CD4-positive, alpha-beta memory T cell (primary cell): ENCODE measurements at regions of chr10 and their contacts with region 1.

Region 1: DNA sequence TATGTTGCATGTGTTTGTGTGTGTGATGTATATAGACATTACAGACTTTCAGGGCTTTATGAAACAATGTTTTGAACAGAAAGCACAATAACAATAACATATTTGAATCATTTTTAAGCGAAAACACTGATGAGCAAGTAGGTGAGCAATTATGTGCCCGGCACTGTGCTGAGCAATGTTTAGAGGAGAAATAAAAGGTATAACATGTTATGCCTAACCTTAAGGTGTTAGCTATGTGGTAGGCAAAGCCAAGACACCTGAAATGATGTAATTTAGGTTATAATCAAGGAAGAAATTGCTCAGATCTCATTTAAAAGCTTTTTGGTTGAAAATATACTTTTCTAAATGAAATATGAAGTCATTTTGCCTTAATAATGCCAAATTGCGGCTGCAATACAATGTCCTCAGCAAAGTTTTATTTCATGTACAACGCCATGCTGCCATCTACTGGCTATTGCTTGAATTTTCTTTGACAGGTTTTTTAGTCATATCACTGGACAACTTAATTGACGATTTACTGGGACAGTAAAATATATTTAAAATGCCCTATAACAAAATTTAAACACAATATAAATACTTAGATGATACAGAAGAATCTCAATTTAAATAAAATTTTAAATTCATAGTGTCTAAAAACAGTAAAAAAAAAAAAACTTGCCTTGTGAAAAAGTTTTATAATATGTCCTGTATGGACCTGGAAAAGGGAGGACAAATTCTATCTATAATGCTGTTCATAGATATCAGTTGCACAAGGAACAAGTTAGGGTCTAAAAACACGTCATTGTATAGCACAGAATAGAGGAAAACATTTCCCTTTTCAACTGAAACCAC is 131.1 kb upstream of the CDK1 start:
- DNase-seq: peak; percentile 45 to 59 (median 51)
- H3K4me3 ChIP-seq: no peak overlapping the region
- H3K4me3 Mint-ChIP-seq: no peak overlapping the region
- H3K27ac ChIP-seq: no peak overlapping the region
- H3K27ac Mint-ChIP-seq: peak overlapping the region in 3 of 7 donors; percentile 7 to 34 (median 14)
- H3K4me1 ChIP-seq: peaks cover 24% of the 10 kb centered on the region
- H3K4me1 Mint-ChIP-seq: peaks cover 34 to 46% (median 35%) of the 10 kb centered on the region in 4 donors
- H3K27me3 ChIP-seq: no peaks in the 10 kb centered on the region
- H3K27me3 Mint-ChIP-seq: no peaks in the 10 kb centered on the region

Region 2: GRCh38 chr10:60099998-60100747 is 547.0 kb before region 1 on chr10:
- CTCF ChIA-PET with region 1: interaction called, 4 read pairs
- POLR2A ChIA-PET with region 1: no interaction called
- intact Hi-C with region 1: loop called (anchors 1 kb)
- DNase-seq: peak in 4 of 5 donors; percentile 23 to 38 (median 34)
- H3K4me3 ChIP-seq: no peak overlapping the region
- H3K4me3 Mint-ChIP-seq: no peak overlapping the region
- H3K27ac ChIP-seq: no peak overlapping the region
- H3K27ac Mint-ChIP-seq: peak overlapping the region in 1 of 7 donors; percentile 1
- H3K4me1 ChIP-seq: no peaks in the 10 kb centered on the region
- H3K4me1 Mint-ChIP-seq: peaks cover 0 to 4% (median under 1%) of the 10 kb centered on the region in 4 donors
- H3K27me3 ChIP-seq: no peaks in the 10 kb centered on the region
- H3K27me3 Mint-ChIP-seq: no peaks in the 10 kb centered on the region

Region 3: GRCh38 chr10:60208676-60209269 is 438.4 kb before region 1 on chr10:
- CTCF ChIA-PET with region 1: interaction called, 18 read pairs
- POLR2A ChIA-PET with region 1: no interaction called
- intact Hi-C with region 1: loop called (anchors 2 kb)
- DNase-seq: no peak
- H3K4me3 ChIP-seq: no peak overlapping the region
- H3K4me3 Mint-ChIP-seq: no peak overlapping the region
- H3K27ac ChIP-seq: no peak overlapping the region
- H3K27ac Mint-ChIP-seq: no peak overlapping the region
- H3K4me1 ChIP-seq: peaks cover 18% of the 10 kb centered on the region
- H3K4me1 Mint-ChIP-seq: peaks cover 25 to 32% (median 26%) of the 10 kb centered on the region in 4 donors
- H3K27me3 ChIP-seq: no peaks in the 10 kb centered on the region
- H3K27me3 Mint-ChIP-seq: no peaks in the 10 kb centered on the region

Region 4: DNA sequence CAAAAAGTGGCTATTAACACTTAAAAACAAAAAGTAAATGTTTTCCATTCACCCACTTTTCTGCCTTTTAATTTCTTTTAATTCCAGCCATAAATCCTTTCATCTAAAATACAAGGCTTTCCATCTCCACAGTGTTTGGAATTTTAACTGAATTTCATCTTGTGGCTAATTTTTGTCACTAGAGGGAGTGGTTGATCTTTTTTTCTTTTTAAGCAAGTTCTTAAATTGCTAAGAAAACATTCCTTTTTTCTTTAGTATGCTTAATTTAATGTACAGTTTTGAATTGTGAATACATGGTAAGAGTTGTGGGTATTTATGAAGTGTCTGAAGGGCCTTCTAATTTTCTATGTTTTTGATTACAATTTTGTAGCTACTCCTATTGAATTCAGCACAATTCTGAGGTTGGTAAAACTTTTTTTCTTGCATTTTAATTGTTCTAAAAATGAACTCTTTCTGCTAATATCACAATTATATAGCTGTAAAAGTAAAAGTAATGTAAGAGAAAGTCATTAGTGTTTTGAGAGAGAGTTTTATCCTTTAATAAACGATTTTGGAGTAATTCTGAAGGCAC is 202.6 kb before region 1 on chr10:
- CTCF ChIA-PET with region 1: interaction called, 13 read pairs
- POLR2A ChIA-PET with region 1: no interaction called
- intact Hi-C with region 1: loop called (anchors 2 kb)
- DNase-seq: no peak
- H3K4me3 ChIP-seq: no peak overlapping the region
- H3K4me3 Mint-ChIP-seq: no peak overlapping the region
- H3K27ac ChIP-seq: no peak overlapping the region
- H3K27ac Mint-ChIP-seq: no peak overlapping the region
- H3K4me1 ChIP-seq: peaks cover 12% of the 10 kb centered on the region
- H3K4me1 Mint-ChIP-seq: peaks cover 18 to 25% (median 19%) of the 10 kb centered on the region in 4 donors
- H3K27me3 ChIP-seq: no peaks in the 10 kb centered on the region
- H3K27me3 Mint-ChIP-seq: no peaks in the 10 kb centered on the region

Region 5: GRCh38 chr10:60456053-60456452 is 191.1 kb before region 1 on chr10:
- CTCF ChIA-PET with region 1: no interaction called
- POLR2A ChIA-PET with region 1: no interaction called
- intact Hi-C with region 1: no loop called
- DNase-seq: no peak
- H3K4me3 ChIP-seq: no peak overlapping the region
- H3K4me3 Mint-ChIP-seq: no peak overlapping the region
- H3K27ac ChIP-seq: no peak overlapping the region
- H3K27ac Mint-ChIP-seq: no peak overlapping the region
- H3K4me1 ChIP-seq: no peaks in the 10 kb centered on the region
- H3K4me1 Mint-ChIP-seq: peaks cover 0 to 15% (median 11%) of the 10 kb centered on the region in 4 donors
- H3K27me3 ChIP-seq: no peaks in the 10 kb centered on the region
- H3K27me3 Mint-ChIP-seq: no peaks in the 10 kb centered on the region

Region 6: DNA sequence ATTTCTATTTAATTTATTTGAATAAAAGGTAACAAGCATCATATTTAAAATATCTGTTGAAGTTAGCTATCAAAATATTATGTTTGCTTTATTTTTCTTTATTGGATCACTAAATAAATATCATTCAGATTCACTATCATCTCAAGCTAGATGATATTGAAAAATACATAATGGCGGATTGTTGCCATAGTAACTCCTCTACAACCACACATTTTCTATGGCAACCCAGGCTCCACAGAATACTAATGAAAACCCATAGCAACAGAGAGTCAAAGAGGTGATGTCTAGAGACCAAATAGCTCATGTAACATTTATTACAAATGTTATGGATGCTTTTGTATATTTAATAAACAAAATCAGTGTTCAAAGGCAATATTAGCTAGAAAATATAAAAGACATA is 17.8 kb before region 1 on chr10:
- CTCF ChIA-PET with region 1: interaction called, 82 read pairs
- POLR2A ChIA-PET with region 1: no interaction called
- intact Hi-C with region 1: no loop called
- DNase-seq: peak in 2 of 5 donors; percentile 7 to 24
- H3K4me3 ChIP-seq: no peak overlapping the region
- H3K4me3 Mint-ChIP-seq: no peak overlapping the region
- H3K27ac ChIP-seq: no peak overlapping the region
- H3K27ac Mint-ChIP-seq: no peak overlapping the region
- H3K4me1 ChIP-seq: no peaks in the 10 kb centered on the region
- H3K4me1 Mint-ChIP-seq: peaks cover 19 to 39% (median 22%) of the 10 kb centered on the region in 4 donors
- H3K27me3 ChIP-seq: no peaks in the 10 kb centered on the region
- H3K27me3 Mint-ChIP-seq: peaks cover 0 to 2% of the 10 kb centered on the region in 2 donors

Region 7: GRCh38 chr10:60660625-60661024 is 13.4 kb after region 1 on chr10:
- CTCF ChIA-PET with region 1: interaction called, 10 read pairs
- POLR2A ChIA-PET with region 1: interaction called, 3 read pairs
- intact Hi-C with region 1: no loop called
- DNase-seq: no peak
- H3K4me3 ChIP-seq: no peak overlapping the region
- H3K4me3 Mint-ChIP-seq: peak overlapping the region in 3 of 8 donors; percentile 19 to 50 (median 27)
- H3K27ac ChIP-seq: no peak overlapping the region
- H3K27ac Mint-ChIP-seq: peak overlapping the region in 3 of 7 donors; percentile 1 to 42 (median 38)
- H3K4me1 ChIP-seq: peaks cover 22% of the 10 kb centered on the region
- H3K4me1 Mint-ChIP-seq: peaks cover 31 to 56% (median 35%) of the 10 kb centered on the region in 4 donors
- H3K27me3 ChIP-seq: no peaks in the 10 kb centered on the region
- H3K27me3 Mint-ChIP-seq: no peaks in the 10 kb centered on the region

Region 8: GRCh38 chr10:60733189-60733822 is 86.1 kb after region 1 on chr10:
- CTCF ChIA-PET with region 1: interaction called, 9 read pairs
- POLR2A ChIA-PET with region 1: interaction called, 5 read pairs
- intact Hi-C with region 1: loop called (anchors 1 kb)
- DNase-seq: peak; percentile 50 to 67 (median 55)
- H3K4me3 ChIP-seq: peak overlapping the region in 1 of 2 donors; percentile 70
- H3K4me3 Mint-ChIP-seq: peak overlapping the region; percentile 65 to 100 (median 84)
- H3K27ac ChIP-seq: peak overlapping the region; percentile 72
- H3K27ac Mint-ChIP-seq: peak overlapping the region in 6 of 7 donors; percentile 72 to 99 (median 88)
- H3K4me1 ChIP-seq: peaks cover 47% of the 10 kb centered on the region
- H3K4me1 Mint-ChIP-seq: peaks cover 24 to 41% (median 35%) of the 10 kb centered on the region in 4 donors
- H3K27me3 ChIP-seq: no peaks in the 10 kb centered on the region
- H3K27me3 Mint-ChIP-seq: no peaks in the 10 kb centered on the region